Transverse colon (tissue), 4 donors: ENCODE measurements at regions of chr2 and their contacts with region 1.

Region 1: DNA sequence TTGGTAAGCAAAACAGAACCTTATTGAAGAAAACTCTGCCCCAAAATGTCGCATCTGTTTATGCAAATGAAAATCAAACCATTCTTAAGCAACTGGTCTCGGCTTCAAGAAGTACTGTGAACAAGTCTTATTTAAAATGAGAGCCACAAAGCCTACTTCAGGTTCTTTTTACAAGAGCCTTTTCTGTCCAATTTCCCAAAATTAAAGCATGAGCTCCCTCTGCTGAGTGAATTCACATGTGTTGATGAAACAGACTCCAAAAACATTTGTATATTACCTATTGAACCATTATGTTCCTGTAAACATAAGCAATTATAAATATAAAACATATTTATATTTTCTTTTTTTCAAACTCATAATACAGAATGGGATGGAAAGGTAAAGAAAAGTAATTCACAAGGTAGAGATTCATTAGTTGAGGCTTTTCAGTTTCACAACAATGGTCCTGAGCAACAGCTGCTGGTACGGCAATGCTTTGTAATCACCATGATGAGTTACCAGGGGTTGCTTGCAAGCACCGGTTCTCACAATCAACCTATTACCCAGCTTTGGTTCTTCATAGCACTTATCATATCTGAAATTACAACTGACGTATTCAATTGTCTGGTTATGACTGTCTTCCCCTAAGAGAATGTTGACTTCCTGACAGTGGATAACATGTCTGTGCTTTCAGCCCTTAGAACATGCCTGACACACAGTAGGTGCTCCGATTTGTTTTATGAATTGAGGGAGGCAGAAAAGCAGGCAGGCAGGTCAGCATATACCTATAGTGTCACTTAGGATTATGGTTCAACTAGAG is 108.4 kb upstream of the BZW1 start:
- DNase-seq: no peak
- H3K4me3 ChIP-seq: no peak overlapping the region
- H3K27ac ChIP-seq: peak overlapping the region in 2 of 4 donors; percentile 24 to 47
- H3K4me1 ChIP-seq: peaks cover 0 to 12% (median 4%) of the 10 kb centered on the region in 4 donors
- H3K27me3 ChIP-seq: no peaks in the 10 kb centered on the region
- CTCF ChIP-seq: peak; percentile 34 to 50 (median 39)
- EP300 ChIP-seq: no peak
- POLR2A ChIP-seq: no peak

Region 2: GRCh38 chr2:200578778-200579177 is 124.5 kb before region 1 on chr2:
- in situ Hi-C with region 1: loop called in 2 of 4 experiments (anchors 10 kb)
- intact Hi-C with region 1: loop called (anchors 10 kb)
- DNase-seq: no peak
- H3K4me3 ChIP-seq: no peak overlapping the region
- H3K27ac ChIP-seq: no peak overlapping the region
- H3K4me1 ChIP-seq: no peaks in the 10 kb centered on the region
- H3K27me3 ChIP-seq: no peaks in the 10 kb centered on the region
- CTCF ChIP-seq: peak; percentile 29 to 59 (median 47)
- EP300 ChIP-seq: no peak
- POLR2A ChIP-seq: no peak

Region 3: DNA sequence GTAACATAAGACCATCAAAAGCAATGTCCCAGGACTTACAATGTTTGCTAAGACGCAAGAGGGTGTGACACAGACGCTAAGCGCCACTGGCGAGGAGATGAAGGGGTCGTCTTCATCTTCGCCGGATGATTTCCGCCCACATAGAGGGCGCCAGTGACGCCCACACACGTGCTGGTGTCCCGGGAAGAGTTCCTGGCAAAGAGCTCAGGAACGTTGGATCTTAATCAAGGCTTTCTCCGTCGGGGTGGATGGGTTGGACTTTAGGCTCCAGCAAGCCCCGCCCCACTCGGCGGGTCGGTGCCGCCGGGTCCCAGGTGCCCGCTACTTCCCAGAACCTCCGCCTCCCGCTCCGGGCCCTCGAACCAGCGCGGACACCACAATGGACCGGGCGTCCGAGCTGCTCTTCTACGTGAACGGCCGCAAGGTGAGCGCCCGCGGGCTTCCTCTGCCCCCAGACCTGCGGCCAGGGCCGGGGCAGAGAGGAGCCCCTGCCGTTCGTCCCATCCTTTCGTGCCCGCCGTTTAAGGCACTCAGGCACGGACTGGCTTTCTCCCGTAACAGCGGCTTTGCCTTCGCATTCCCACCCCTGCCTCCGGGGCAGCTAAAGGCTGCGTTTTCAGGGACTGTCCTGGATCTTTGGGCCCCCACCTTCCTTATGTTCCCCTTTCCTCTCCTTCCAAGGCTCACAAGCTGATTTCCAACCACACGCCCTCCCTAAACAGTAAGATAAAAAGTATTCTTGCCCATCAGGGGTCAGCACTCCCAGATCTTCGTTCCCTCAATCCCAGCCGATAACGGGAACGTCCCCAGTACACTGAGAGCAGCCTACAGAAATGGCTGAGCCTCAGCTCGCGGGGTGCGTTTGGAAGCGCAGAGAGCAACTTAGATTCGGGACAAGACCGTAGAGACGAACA is 117.3 kb before region 1 on chr2 and contains the start of gene AOX1:
- in situ Hi-C with region 1: loop called in 1 of 4 experiments (anchors 10 kb)
- intact Hi-C with region 1: loop called (anchors 10 kb)
- DNase-seq: peak; percentile 47
- H3K4me3 ChIP-seq: peak within 1 kb of the TSS; percentile 18 to 71 (median 42)
- H3K27ac ChIP-seq: peak within 1 kb of the TSS; percentile 55 to 70 (median 63)
- H3K4me1 ChIP-seq: peaks cover 0 to 12% (median 10%) of the 10 kb centered on the region in 4 donors
- H3K27me3 ChIP-seq: no peaks in the 10 kb centered on the region
- CTCF ChIP-seq: no peak
- EP300 ChIP-seq: no peak
- POLR2A ChIP-seq: no peak
- total RNA-seq, gene AOX1: 12.0 to 28.1 (median 19.0) TPM

Region 4: GRCh38 chr2:200913654-200914053 is 210.3 kb after region 1 on chr2:
- in situ Hi-C with region 1: no loop called
- intact Hi-C with region 1: no loop called
- DNase-seq: no peak
- H3K4me3 ChIP-seq: no peak overlapping the region
- H3K27ac ChIP-seq: no peak overlapping the region
- H3K4me1 ChIP-seq: no peaks in the 10 kb centered on the region
- H3K27me3 ChIP-seq: no peaks in the 10 kb centered on the region
- CTCF ChIP-seq: no peak
- EP300 ChIP-seq: no peak
- POLR2A ChIP-seq: no peak